ENCODE measurements at regions of chrX and their contacts with region 1.

Region 1: GRCh38 chrX:134782796-134783195 is 124.5 kb upstream of the PLAC1 start:
- DNase-seq: peak; percentile 48
- H3K4me3 Mint-ChIP-seq: no peak overlapping the region
- H3K27ac Mint-ChIP-seq: no peak overlapping the region
- H3K4me1 Mint-ChIP-seq: no peaks in the 10 kb centered on the region
- H3K27me3 Mint-ChIP-seq: peaks cover 18% of the 10 kb centered on the region
- CTCF ChIP-seq: peak; percentile 51

Region 2: GRCh38 chrX:134484039-134484438 is 298.8 kb before region 1 on chrX:
- CTCF ChIA-PET with region 1: interaction called, 10 read pairs
- POLR2A ChIA-PET with region 1: interaction called, 3 read pairs
- intact Hi-C with region 1: loop called (anchors 1 kb)
- DNase-seq: peak; percentile 59
- H3K4me3 Mint-ChIP-seq: no peak overlapping the region
- H3K27ac Mint-ChIP-seq: no peak overlapping the region
- H3K4me1 Mint-ChIP-seq: no peaks in the 10 kb centered on the region
- H3K27me3 Mint-ChIP-seq: peaks cover 25% of the 10 kb centered on the region
- CTCF ChIP-seq: peak; percentile 63

Region 3: GRCh38 chrX:134502686-134503085 is 280.1 kb before region 1 on chrX:
- CTCF ChIA-PET with region 1: interaction called, 13 read pairs
- POLR2A ChIA-PET with region 1: interaction called, 3 read pairs
- intact Hi-C with region 1: no loop called
- DNase-seq: no peak
- H3K4me3 Mint-ChIP-seq: no peak overlapping the region
- H3K27ac Mint-ChIP-seq: no peak overlapping the region
- H3K4me1 Mint-ChIP-seq: no peaks in the 10 kb centered on the region
- H3K27me3 Mint-ChIP-seq: peaks cover 73% of the 10 kb centered on the region
- CTCF ChIP-seq: no peak

Region 4: DNA sequence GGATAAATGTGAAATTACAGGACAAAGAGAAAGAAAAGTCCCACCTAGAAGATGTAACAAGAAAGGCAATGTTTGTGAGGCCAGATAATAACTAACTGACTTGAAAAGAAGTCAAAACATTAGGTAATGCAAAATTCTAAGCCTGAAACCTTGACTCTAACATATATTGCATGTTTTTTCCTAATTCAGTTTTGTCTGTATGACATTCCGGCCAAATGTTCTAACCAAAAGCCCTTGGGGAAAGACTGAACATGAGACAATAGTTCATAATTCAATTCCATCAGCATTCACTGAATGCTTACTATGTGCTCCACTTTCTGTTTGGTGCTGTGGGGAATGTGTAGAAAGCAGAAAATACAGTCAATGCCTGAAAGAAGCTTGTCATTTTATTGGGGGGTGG is 39.7 kb before region 1 on chrX:
- CTCF ChIA-PET with region 1: no interaction called
- POLR2A ChIA-PET with region 1: no interaction called
- intact Hi-C with region 1: no loop called
- DNase-seq: no peak
- H3K4me3 Mint-ChIP-seq: no peak overlapping the region
- H3K27ac Mint-ChIP-seq: no peak overlapping the region
- H3K4me1 Mint-ChIP-seq: no peaks in the 10 kb centered on the region
- H3K27me3 Mint-ChIP-seq: peaks cover 31% of the 10 kb centered on the region
- CTCF ChIP-seq: no peak

Region 5: GRCh38 chrX:134764212-134764785 is 18.5 kb before region 1 on chrX:
- CTCF ChIA-PET with region 1: interaction called, 18 read pairs
- POLR2A ChIA-PET with region 1: no interaction called
- intact Hi-C with region 1: no loop called
- DNase-seq: peak; percentile 65
- H3K4me3 Mint-ChIP-seq: no peak overlapping the region
- H3K27ac Mint-ChIP-seq: no peak overlapping the region
- H3K4me1 Mint-ChIP-seq: peaks cover 7% of the 10 kb centered on the region
- H3K27me3 Mint-ChIP-seq: peaks cover 13% of the 10 kb centered on the region
- CTCF ChIP-seq: peak; percentile 21

Region 6: DNA sequence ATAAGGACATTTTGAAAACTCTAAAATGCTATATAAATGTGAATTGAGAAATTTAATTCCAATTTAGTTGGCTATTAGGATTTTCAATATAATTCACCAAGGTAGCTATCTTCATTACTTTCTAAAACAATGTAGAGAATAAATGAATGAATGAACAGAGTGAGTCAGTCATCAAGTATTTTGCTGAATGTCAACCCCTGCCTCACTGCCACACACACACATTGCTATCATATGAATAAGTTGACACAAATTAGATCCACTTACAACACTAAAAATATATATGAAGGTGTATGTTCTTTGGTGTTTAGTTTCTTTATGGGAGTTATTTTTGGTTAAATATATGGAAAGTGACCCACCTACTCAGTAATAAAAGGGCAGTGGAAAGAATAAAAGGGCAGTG is 66.6 kb after region 1 on chrX:
- CTCF ChIA-PET with region 1: no interaction called
- POLR2A ChIA-PET with region 1: no interaction called
- intact Hi-C with region 1: no loop called
- DNase-seq: peak; percentile 4
- H3K4me3 Mint-ChIP-seq: no peak overlapping the region
- H3K27ac Mint-ChIP-seq: no peak overlapping the region
- H3K4me1 Mint-ChIP-seq: no peaks in the 10 kb centered on the region
- H3K27me3 Mint-ChIP-seq: peaks cover 62% of the 10 kb centered on the region
- CTCF ChIP-seq: no peak

Region 7: GRCh38 chrX:135024526-135024925 is 241.7 kb after region 1 on chrX:
- CTCF ChIA-PET with region 1: no interaction called
- POLR2A ChIA-PET with region 1: no interaction called
- intact Hi-C with region 1: no loop called
- DNase-seq: no peak
- H3K4me3 Mint-ChIP-seq: no peak overlapping the region
- H3K27ac Mint-ChIP-seq: no peak overlapping the region
- H3K4me1 Mint-ChIP-seq: peaks cover 6% of the 10 kb centered on the region
- H3K27me3 Mint-ChIP-seq: no peaks in the 10 kb centered on the region
- CTCF ChIP-seq: no peak